ENCODE measurements at regions of chr12 and their contacts with region 1.

Region 1: GRCh38 chr12:98653866-98654493 is 8.9 kb downstream of the APAF1 start:
- DNase-seq: peak; percentile 42
- ATAC-seq: peak; percentile 70
- H3K4me3 ChIP-seq: no peak overlapping the region
- H3K27ac ChIP-seq: no peak overlapping the region
- H3K4me1 ChIP-seq: peaks cover 9 to 11% of the 10 kb centered on the region in 2 experiments
- H3K27me3 ChIP-seq: no peaks in the 10 kb centered on the region
- CTCF ChIP-seq: peak; percentile 53 to 87 (median 83); a peak in 5 of 6 replicates
- POLR2A ChIP-seq: no peak
- RAD21 ChIP-seq: peak; percentile 92

Region 2: DNA sequence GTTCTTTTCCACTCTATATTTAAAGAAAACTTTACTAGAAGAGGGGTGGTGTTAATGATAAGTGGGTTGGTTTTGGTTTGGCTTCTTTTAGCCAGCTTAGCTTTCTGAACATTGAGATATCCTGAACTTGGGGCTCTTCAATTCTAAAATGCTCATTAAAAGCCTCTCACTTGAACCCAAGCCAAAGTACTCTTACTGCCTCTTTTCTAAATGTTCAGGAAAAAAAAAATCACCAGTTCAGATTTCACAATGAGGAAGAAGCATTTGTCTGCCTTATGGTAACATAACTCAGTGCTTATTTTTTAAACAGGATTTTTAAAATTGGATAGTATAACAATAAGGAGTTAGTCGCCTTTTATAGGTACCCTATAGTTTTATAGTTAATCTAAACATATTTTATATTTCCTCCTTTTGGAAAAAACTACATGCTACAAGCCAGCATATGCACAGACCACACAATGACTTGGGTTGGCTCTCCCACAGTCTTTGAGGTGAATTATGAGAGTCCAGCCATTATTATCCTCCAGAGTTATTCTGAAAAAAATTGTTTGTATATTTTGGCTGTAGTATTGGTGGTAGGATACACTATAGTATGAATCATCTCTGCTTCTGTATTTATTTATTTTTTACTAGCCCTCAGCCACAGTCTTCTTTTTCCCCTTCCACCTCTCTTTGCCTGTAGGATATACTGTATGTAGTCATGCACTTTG is 334.1 kb before region 1 on chr12:
- CTCF ChIA-PET with region 1: no interaction called
- POLR2A ChIA-PET with region 1: no interaction called
- RAD21 ChIA-PET with region 1: no interaction called
- intact Hi-C with region 1: no loop called
- DNase-seq: no peak
- ATAC-seq: no peak
- H3K4me3 ChIP-seq: no peak overlapping the region
- H3K27ac ChIP-seq: no peak overlapping the region
- H3K4me1 ChIP-seq: no peaks in the 10 kb centered on the region
- H3K27me3 ChIP-seq: peaks cover 14% of the 10 kb centered on the region
- CTCF ChIP-seq: no peak
- POLR2A ChIP-seq: no peak
- RAD21 ChIP-seq: no peak

Region 3: DNA sequence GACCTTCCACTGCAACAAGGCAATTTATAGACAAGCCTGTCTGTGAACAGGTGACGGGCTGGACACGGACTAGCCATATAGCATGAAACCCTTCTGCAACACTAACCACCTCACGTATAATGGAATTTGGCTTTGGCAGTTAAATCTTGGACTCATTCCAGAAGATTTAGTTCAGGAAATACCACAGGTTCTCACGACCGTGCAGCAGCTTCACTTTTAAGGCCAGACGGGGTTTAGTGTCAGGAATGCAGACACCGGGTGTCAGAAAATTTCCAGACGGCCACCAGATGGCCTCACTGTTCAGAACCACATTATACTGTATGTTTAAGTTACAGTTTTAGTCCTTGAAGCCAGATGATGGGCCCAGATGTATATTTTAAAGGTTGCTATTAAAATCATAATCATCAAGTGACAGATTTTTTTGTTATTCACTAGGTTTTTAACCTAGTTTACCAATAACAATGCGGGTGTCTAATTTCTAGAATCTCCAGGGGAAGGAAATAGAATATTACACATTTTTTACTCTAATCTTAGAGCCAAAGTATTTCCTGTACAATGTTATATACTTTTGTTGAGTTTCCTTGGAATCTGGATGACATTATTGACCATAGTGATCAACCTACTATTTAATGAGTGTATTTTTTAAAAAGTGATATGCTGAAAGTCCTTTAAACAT is 229.1 kb before region 1 on chr12:
- CTCF ChIA-PET with region 1: interaction called, 4 read pairs
- POLR2A ChIA-PET with region 1: no interaction called
- RAD21 ChIA-PET with region 1: no interaction called
- intact Hi-C with region 1: loop called (anchors 1 kb)
- DNase-seq: peak; percentile 57
- ATAC-seq: peak; percentile 83
- H3K4me3 ChIP-seq: no peak overlapping the region
- H3K27ac ChIP-seq: no peak overlapping the region
- H3K4me1 ChIP-seq: peaks cover 3 to 16% of the 10 kb centered on the region in 2 experiments; a peak in 3 of 4 replicates
- H3K27me3 ChIP-seq: no peaks in the 10 kb centered on the region
- CTCF ChIP-seq: peak; percentile 64 to 81 (median 79)
- POLR2A ChIP-seq: no peak
- RAD21 ChIP-seq: peak; percentile 78

Region 4: DNA sequence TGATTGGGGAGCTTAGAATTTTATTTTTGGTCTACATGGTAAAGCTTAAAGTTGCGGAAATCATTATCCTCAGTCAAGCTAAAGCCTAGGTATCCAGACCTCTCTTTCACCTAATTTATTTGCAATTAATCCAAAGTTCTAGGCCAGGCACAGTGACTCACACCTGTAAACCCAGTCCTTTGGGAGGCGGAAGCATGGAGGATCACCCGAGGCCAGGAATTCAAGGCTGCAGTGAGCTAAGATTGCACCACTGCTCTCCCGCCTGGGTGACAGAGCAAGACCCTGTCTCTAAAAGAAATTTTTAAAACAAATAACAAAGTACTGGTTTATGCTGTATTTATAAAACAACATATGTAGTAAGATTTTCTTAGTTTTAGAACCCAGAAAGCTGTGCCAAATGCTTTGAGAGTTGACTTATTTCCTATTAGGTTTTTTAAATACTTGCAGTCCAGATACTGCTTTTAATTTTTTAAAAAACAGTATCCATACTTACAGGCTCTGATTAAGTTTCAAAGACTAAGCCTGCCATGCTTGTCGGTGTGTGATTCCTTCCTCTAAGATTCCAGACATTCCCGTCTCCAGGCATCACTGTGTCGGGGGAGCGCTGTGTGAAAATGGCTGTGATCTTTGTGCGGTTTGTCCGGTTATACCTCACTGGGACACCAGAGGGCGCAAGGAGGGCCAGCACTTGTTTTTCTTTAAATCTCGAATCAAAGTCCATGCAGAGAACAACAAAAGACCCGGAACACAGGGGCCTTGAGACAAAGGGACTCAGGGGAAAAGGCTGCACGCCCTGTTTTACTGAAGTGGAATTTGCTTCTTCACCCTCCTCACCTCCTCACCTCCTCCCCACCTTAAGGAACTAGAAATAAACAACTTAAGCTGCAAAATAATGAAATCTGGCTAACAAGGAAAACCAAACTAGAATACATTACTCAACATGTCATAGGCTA is 163.2 kb before region 1 on chr12:
- CTCF ChIA-PET with region 1: no interaction called
- POLR2A ChIA-PET with region 1: no interaction called
- RAD21 ChIA-PET with region 1: no interaction called
- intact Hi-C with region 1: loop called (anchors 1 kb)
- DNase-seq: peak; percentile 81
- ATAC-seq: peak; percentile 87
- H3K4me3 ChIP-seq: peak overlapping the region in 1 of 2 experiments; percentile 1; a peak in 1 of 4 replicates
- H3K27ac ChIP-seq: peak overlapping the region; percentile 57; the same call in 1 of the 2 replicates
- H3K4me1 ChIP-seq: peaks cover 21 to 27% of the 10 kb centered on the region in 2 experiments
- H3K27me3 ChIP-seq: no peaks in the 10 kb centered on the region
- CTCF ChIP-seq: peak; percentile 86 to 94 (median 88)
- POLR2A ChIP-seq: no peak
- RAD21 ChIP-seq: peak; percentile 82

Region 5: GRCh38 chr12:98561846-98562245 is 92.1 kb before region 1 on chr12:
- CTCF ChIA-PET with region 1: interaction called, 8 read pairs
- POLR2A ChIA-PET with region 1: interaction called, 3 read pairs
- RAD21 ChIA-PET with region 1: no interaction called
- intact Hi-C with region 1: loop called (anchors 1 kb)
- DNase-seq: no peak
- ATAC-seq: no peak
- H3K4me3 ChIP-seq: no peak overlapping the region
- H3K27ac ChIP-seq: no peak overlapping the region
- H3K4me1 ChIP-seq: peaks cover 0 to 5% of the 10 kb centered on the region in 2 experiments; a peak in 2 of 4 replicates
- H3K27me3 ChIP-seq: no peaks in the 10 kb centered on the region
- CTCF ChIP-seq: no peak
- POLR2A ChIP-seq: no peak
- RAD21 ChIP-seq: no peak

Region 6: GRCh38 chr12:98606357-98606988 is 47.5 kb before region 1 on chr12:
- CTCF ChIA-PET with region 1: interaction called, 3 read pairs
- POLR2A ChIA-PET with region 1: no interaction called
- RAD21 ChIA-PET with region 1: no interaction called
- intact Hi-C with region 1: loop called (anchors 2 kb)
- DNase-seq: no peak
- ATAC-seq: no peak
- H3K4me3 ChIP-seq: no peak overlapping the region
- H3K27ac ChIP-seq: no peak overlapping the region
- H3K4me1 ChIP-seq: no peaks in the 10 kb centered on the region
- H3K27me3 ChIP-seq: no peaks in the 10 kb centered on the region
- CTCF ChIP-seq: peak in 1 of 3 experiments; percentile 32; a peak in 1 of 6 replicates
- POLR2A ChIP-seq: no peak
- RAD21 ChIP-seq: peak; percentile 50

Region 7: DNA sequence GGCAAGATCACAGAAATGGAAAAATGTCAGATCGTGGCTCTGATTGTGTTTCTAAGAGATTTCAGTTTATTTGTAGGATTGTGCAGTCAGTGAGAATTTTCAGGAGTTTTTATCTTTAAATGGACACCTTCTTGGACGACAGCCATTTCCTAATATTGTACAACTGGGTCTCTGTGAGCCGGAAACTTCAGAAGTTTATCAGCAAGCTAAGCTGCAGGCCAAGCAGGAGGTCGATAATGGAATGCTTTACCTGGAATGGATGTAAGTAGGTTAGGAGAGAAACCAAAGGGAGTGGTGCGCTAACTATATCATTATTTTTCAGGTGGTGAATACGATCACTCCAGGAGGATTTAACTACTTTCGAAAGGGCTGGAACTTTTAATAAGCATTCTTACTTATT is 17.5 kb after region 1 on chr12:
- CTCF ChIA-PET with region 1: no interaction called
- POLR2A ChIA-PET with region 1: no interaction called
- RAD21 ChIA-PET with region 1: no interaction called
- intact Hi-C with region 1: no loop called
- DNase-seq: no peak
- ATAC-seq: no peak
- H3K4me3 ChIP-seq: no peak overlapping the region
- H3K27ac ChIP-seq: no peak overlapping the region
- H3K4me1 ChIP-seq: no peaks in the 10 kb centered on the region
- H3K27me3 ChIP-seq: no peaks in the 10 kb centered on the region
- CTCF ChIP-seq: no peak
- POLR2A ChIP-seq: no peak
- RAD21 ChIP-seq: no peak

Region 8: DNA sequence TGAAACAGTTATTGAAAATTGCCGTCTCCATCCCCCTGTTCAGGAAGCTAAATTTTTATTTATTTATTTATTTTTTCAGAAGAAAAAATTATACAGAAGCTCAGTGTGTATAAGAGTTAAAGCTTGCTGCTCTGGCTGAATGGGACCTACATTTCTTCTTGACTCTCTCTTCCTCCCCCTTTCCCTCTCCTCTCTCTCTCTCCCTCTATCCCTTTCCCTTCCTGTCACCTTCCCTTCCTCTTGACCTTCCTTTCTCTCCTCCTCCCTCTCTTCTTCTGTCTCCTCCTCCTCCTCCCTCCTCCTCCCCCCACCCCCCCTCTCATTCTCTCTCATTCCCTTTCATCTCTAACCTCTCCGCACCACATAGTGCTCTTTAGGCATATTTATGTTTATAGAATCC is 30.2 kb after region 1 on chr12:
- CTCF ChIA-PET with region 1: no interaction called
- POLR2A ChIA-PET with region 1: no interaction called
- RAD21 ChIA-PET with region 1: no interaction called
- intact Hi-C with region 1: no loop called
- DNase-seq: no peak
- ATAC-seq: no peak
- H3K4me3 ChIP-seq: no peak overlapping the region
- H3K27ac ChIP-seq: no peak overlapping the region
- H3K4me1 ChIP-seq: no peaks in the 10 kb centered on the region
- H3K27me3 ChIP-seq: no peaks in the 10 kb centered on the region
- CTCF ChIP-seq: no peak
- POLR2A ChIP-seq: no peak
- RAD21 ChIP-seq: no peak

Region 9: DNA sequence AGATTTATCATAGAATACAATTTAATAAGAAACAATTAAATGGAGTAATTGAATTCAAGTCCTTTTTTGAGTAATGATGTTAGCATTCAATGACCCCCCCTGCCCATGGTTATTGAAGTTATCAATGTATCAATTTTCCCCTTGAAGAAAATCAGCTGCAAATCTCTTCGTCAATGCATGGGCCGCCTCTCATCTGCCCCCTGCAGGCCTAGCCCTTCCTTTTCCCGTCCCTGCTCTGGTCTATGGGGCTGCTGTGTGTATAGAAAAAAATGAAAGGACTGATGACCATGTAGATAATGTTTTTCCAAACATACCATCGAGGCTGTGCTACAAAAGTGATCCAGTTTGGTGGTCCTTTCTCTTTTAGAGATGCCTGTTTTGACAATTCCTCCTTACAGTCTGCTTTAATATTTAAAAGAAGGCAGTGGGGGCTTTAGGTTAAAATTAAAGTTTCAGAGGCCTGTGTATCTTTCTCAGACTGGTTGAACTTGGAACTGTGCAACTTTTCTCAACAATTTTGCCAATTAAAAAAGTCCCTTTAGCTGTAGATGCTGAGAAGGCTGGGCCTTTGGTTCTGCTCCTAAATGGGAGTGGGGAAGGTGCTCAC is 89.5 kb after region 1 on chr12:
- CTCF ChIA-PET with region 1: no interaction called
- POLR2A ChIA-PET with region 1: no interaction called
- RAD21 ChIA-PET with region 1: no interaction called
- intact Hi-C with region 1: no loop called
- DNase-seq: peak; percentile 21
- ATAC-seq: peak; percentile 97
- H3K4me3 ChIP-seq: no peak overlapping the region
- H3K27ac ChIP-seq: no peak overlapping the region
- H3K4me1 ChIP-seq: no peaks in the 10 kb centered on the region
- H3K27me3 ChIP-seq: peaks cover 28% of the 10 kb centered on the region; the same call in 1 of the 2 replicates
- CTCF ChIP-seq: peak; percentile 45 to 94 (median 91); a peak in 5 of 6 replicates
- POLR2A ChIP-seq: no peak
- RAD21 ChIP-seq: peak; percentile 46; the same call in 1 of the 2 replicates